AG04449 (cell line): ENCODE measurements at regions of chr2 and their contacts with region 1.

Region 1: DNA sequence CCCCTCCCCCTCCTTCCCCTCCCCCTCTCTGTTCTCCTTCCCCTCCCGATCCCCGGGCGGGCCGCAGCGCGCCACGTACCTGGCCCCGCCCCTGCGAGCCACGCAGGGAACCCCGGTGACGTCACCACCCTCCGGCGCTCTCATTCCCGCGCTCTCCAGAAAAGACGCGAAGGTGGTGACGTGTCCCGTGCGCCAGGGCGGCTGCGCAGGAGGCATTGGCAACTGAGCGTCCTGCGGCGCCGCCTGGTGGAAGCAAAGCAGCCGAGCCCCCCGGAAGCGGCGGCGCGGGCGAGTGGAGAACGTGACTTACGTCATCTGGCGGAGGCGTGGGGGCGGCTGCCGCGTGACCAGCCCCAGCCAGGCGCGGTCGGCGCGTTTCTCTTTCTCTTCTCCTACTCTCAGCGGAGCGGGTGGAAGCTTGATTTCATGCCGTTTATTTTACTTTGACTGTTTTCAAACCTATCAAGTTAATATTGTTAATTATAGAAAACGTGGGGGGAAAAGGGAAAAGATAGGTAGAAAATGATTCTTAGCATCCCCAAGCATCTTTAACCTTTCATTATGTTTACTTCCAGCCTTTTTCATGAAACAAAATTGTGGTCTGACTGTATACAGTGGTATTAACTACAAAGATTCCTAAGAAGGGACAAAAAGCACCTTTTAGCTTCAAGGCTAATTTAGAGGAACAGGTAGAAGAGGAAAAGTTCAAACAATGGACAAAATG is 48.1 kb downstream of the C2orf42 start:
- DNase-seq: peak; percentile 88
- H3K4me3 ChIP-seq: peak overlapping the region; percentile 60
- CTCF ChIP-seq: peak; percentile 98

Region 2: GRCh38 chr2:70070541-70071268 is 72.0 kb before region 1 on chr2:
- CTCF ChIA-PET with region 1: interaction called, 19 read pairs
- POLR2A ChIA-PET with region 1: no interaction called
- DNase-seq: peak; percentile 70
- H3K4me3 ChIP-seq: no peak overlapping the region
- CTCF ChIP-seq: peak; percentile 79

Region 3: GRCh38 chr2:70086838-70087701 is 55.7 kb before region 1 on chr2 and contains the start of gene PCBP1:
- CTCF ChIA-PET with region 1: interaction called, 21 read pairs
- POLR2A ChIA-PET with region 1: interaction called, 6 read pairs
- DNase-seq: peak; percentile 81
- H3K4me3 ChIP-seq: peak within 1 kb of the TSS; percentile 83
- CTCF ChIP-seq: no peak